Stomach (tissue), 19 donors: ENCODE measurements at regions of chr10 and their contacts with region 1.

Region 1: DNA sequence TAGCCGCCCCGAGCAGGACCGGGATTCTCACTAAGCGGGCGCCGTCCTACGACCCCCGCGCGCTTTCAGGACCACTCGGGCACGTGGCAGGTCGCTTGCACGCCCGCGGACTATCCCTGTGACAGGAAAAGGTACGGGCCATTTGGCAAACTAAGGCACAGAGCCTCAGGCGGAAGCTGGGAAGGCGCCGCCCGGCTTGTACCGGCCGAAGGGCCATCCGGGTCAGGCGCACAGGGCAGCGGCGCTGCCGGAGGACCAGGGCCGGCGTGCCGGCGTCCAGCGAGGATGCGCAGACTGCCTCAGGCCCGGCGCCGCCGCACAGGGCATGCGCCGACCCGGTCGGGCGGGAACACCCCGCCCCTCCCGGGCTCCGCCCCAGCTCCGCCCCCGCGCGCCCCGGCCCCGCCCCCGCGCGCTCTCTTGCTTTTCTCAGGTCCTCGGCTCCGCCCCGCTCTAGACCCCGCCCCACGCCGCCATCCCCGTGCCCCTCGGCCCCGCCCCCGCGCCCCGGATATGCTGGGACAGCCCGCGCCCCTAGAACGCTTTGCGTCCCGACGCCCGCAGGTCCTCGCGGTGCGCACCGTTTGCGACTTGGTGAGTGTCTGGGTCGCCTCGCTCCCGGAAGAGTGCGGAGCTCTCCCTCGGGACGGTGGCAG is at the start of gene MGMT:
- DNase-seq: peak; percentile 97 to 98
- H3K4me3 ChIP-seq: peak within 1 kb of the TSS; percentile 67 to 83 (median 70)
- H3K27ac ChIP-seq: peak within 1 kb of the TSS; percentile 75 to 87 (median 83)
- H3K4me1 ChIP-seq: peaks cover 11 to 29% (median 20%) of the 10 kb centered on the region in 4 donors
- H3K27me3 ChIP-seq: no peaks in the 10 kb centered on the region
- CTCF ChIP-seq: no peak
- EP300 ChIP-seq: no peak
- POLR2A ChIP-seq: no peak
- total RNA-seq, gene MGMT: 1.2 to 37.8 (median 18.3) TPM

Region 2: DNA sequence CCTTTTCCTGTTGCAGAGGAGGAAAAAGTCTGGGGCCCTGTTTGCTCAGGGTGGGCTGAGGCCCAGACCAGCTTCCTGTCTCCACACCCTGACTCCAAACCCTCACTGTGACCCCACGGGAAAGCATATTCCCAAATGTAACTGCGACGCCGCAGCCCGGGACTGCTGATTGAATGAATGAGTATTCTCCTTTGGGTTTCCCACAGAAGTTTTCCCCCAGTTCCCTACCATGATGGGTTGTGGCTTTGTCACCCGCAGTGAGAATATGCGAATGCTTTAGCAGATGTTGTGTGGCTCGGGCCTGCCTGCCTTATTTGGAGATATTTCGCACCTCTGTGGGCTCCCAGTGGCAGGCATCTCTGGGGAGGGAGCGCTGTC is 50.8 kb after region 1 on chr10:
- intact Hi-C with region 1: no loop called
- DNase-seq: no peak
- H3K4me3 ChIP-seq: no peak overlapping the region
- H3K27ac ChIP-seq: no peak overlapping the region
- H3K4me1 ChIP-seq: peaks cover 0 to 13% (median 0%) of the 10 kb centered on the region in 4 donors
- H3K27me3 ChIP-seq: no peaks in the 10 kb centered on the region
- CTCF ChIP-seq: no peak
- EP300 ChIP-seq: no peak
- POLR2A ChIP-seq: no peak

Region 3: DNA sequence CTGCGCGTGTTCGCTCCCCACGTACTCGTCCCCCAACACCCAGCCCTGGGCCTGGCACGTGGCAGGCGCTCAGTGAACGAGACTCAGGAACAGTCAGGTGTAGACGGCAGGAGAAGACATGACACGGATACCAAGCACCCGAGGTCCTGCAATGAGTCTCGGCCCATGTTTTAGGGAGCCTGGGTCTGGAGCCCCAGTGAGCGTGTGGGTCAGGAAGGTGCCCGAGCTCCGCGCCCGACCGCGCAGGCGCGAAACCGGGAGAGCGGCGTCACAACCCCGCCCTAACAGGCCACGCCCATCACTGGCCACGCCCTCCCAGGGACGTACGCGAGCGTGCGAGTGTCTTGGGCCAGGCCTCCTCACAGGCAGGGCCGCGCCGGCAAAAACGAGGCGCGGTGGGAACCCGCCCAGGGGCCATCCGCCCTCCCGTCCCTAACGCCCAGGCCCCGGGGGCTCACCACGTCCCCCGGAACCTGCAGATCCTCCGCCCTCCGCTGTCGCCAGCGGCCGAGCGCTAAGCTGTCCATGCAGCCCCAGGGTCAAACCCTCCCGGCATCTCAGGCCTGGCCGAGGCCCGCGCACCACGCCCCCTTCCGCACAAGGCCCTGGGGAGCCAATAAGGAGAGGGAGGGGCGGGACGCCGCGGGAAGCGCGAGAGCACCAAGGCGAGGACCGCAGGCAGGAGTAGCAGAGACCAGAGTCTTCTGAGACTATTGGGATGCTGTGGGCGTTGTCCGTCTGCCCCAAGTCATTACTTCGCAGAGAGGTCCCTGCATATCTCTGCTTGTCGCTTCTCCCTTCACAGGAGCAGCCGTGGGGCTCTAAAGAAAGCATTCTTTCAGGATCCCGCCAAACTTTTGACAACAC is 643.6 kb after region 1 on chr10 and contains the start of gene C10orf143:
- intact Hi-C with region 1: loop called (anchors 10 kb)
- DNase-seq: peak; percentile 98 to 99
- H3K4me3 ChIP-seq: peak within 1 kb of the TSS; percentile 68 to 91 (median 77)
- H3K27ac ChIP-seq: peak within 1 kb of the TSS; percentile 92 to 97 (median 96)
- H3K4me1 ChIP-seq: peaks cover 18 to 37% (median 30%) of the 10 kb centered on the region in 4 donors
- H3K27me3 ChIP-seq: no peaks in the 10 kb centered on the region
- CTCF ChIP-seq: no peak
- EP300 ChIP-seq: no peak
- POLR2A ChIP-seq: peak in 1 of 4 donors; percentile 58
- total RNA-seq, gene C10orf143: 0.29 to 1.5 (median 1.3) TPM in 3 of 5 donors, not detected in the others